ENCODE measurements at regions of chr2 and their contacts with region 1.

Region 1: DNA sequence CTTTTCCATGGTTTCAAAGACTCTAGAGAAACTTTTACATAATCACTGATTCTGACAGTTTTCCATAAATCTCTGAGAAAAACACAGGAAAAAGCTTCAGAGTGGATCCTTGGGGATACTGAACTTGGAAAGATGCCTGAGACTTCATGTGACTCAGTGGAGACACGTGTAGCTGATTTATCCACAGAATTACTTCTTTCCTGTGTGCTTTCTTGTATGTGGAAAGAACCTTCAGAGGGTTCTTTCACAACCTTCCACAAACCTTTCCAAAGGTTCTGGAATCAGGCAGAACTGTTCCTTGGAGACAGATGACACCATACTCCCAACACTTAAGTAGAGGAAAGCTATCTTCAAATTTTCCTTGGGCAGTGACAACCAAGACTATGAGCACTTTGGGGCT is 207.2 kb downstream of the RND3 start:
- DNase-seq: peak in 1 of 2 donors; percentile 79
- ATAC-seq: peak; percentile 64 to 92 (median 84)
- H3K4me3 ChIP-seq: no peak overlapping the region
- H3K27ac ChIP-seq: peak overlapping the region in 8 of 10 donors; percentile 12 to 67 (median 38)
- H3K4me1 ChIP-seq: peaks cover 0 to 27% (median 6%) of the 10 kb centered on the region in 9 donors
- H3K27me3 ChIP-seq: no peaks in the 10 kb centered on the region
- CTCF ChIP-seq: no peak

Region 2: GRCh38 chr2:150174971-150175421 is 105.2 kb before region 1 on chr2:
- intact Hi-C with region 1: no loop called
- DNase-seq: no peak
- ATAC-seq: no peak
- H3K4me3 ChIP-seq: no peak overlapping the region
- H3K27ac ChIP-seq: no peak overlapping the region
- H3K4me1 ChIP-seq: no peaks in the 10 kb centered on the region
- H3K27me3 ChIP-seq: no peaks in the 10 kb centered on the region
- CTCF ChIP-seq: no peak

Region 3: DNA sequence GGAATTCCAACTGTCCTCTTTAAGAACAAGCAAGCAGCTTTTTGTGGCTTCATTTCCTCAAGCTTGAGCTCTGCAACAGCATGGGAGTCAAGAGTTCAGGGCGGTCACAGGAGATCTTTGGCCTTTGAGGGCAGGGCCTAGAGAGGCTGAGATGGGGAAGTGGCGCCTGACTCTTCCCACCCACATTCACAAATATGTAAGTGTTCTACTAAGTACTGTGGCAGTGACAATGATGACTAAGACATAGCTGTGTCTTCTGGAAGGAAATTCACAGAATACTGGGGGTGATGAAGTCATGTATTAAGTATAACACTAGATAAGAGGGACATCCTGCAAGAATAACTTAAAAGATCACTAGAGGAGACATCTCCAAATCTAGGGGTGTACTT is 192.3 kb after region 1 on chr2:
- intact Hi-C with region 1: loop called in 1 of 10 experiments (anchors 10 kb)
- DNase-seq: peak; percentile 47 to 50
- ATAC-seq: peak; percentile 66 to 90 (median 79)
- H3K4me3 ChIP-seq: no peak overlapping the region
- H3K27ac ChIP-seq: peak overlapping the region in 8 of 10 donors; percentile 8 to 97 (median 67)
- H3K4me1 ChIP-seq: peaks cover 14 to 77% (median 54%) of the 10 kb centered on the region in 9 donors
- H3K27me3 ChIP-seq: no peaks in the 10 kb centered on the region
- CTCF ChIP-seq: no peak

Measured in heart right ventricle (tissue), 16 donors.